Calu3 (cell line): ENCODE measurements at regions of chr11 and their contacts with region 1.

Region 1: DNA sequence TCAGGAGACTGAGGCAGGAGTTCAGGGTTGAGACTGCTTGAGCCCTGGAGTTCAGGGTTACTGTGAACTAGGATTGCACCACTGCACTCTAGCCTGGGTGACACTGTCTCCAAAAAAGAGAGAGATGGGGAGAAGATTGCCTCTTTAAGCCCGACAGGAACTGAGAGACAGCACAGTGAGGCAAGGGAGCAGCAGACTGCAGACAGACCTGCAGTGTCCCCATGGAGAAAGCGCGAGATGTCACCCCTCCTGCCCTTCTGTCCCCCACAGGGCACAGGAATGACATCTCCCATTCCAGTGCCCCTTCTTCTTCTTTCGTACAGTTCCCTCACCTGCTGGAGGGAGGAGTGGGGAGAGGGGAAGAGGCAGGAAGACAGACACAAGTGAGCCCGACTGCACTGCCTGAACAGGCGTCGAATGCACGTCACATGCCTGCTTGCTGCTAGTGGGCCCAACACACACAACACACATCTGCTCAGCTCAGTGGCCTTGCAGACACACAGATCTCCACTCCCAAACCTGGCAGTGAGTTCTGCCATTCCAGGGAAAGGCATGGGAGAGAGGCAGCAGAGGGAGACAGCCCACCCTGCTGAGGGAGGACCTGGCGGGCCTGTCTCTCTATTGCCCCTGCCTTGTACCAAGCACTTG is 167.0 kb downstream of the DSCAML1 start:
- DNase-seq: no peak
- H3K4me3 Mint-ChIP-seq: no peak overlapping the region
- H3K27ac Mint-ChIP-seq: no peak overlapping the region
- H3K4me1 Mint-ChIP-seq: no peaks in the 10 kb centered on the region
- H3K27me3 Mint-ChIP-seq: peaks cover 47% of the 10 kb centered on the region
- CTCF ChIP-seq: no peak

Region 2: DNA sequence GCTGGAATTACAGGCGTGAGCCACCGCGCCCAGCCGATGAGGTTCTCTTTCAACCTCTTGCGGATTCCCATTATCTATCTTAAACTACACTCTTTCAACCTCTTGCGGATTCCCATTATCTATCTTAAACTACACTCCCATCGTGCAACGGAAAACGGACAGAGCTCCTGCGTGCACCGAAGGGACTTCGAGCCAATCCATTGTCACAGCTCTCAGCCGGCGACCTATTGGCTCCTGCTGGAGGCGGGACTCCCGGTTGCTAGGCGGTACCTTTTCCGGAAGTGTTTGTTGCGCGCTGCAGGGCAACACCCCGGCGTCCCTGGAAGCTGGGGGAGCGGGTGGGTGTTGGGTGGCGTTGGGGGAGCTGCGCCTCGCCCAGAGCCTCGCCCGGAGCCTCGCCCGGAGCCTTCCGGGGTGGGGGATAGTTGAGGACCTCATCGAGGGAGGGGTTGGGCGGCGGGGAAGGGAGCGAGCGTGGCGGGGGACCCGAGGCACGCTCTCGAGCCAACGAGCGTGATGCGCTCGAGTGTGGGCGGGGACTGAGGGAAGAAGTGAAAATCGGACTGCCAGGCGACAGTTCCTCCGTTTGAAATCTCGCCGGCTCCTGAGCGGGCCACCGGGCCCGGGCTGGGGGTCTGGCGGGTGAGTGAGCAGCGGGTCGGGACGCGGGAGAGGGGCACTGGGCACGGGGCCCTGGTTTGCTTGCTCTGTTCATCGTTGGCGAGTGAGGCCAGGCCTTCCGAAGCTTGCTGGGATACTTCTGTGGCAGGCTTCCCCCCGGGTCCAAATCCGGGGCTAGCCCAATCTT is 302.2 kb before region 1 on chr11 and contains the start of gene CEP164:
- CTCF ChIA-PET with region 1: no interaction called
- intact Hi-C with region 1: no loop called
- DNase-seq: peak; percentile 89
- H3K4me3 Mint-ChIP-seq: no peak within 1 kb of the TSS
- H3K27ac Mint-ChIP-seq: no peak within 1 kb of the TSS
- H3K4me1 Mint-ChIP-seq: no peaks in the 10 kb centered on the region
- H3K27me3 Mint-ChIP-seq: no peaks in the 10 kb centered on the region
- CTCF ChIP-seq: no peak
- total RNA-seq, gene CEP164: 25.4 and 29.6 TPM in 2 replicates

Region 3: DNA sequence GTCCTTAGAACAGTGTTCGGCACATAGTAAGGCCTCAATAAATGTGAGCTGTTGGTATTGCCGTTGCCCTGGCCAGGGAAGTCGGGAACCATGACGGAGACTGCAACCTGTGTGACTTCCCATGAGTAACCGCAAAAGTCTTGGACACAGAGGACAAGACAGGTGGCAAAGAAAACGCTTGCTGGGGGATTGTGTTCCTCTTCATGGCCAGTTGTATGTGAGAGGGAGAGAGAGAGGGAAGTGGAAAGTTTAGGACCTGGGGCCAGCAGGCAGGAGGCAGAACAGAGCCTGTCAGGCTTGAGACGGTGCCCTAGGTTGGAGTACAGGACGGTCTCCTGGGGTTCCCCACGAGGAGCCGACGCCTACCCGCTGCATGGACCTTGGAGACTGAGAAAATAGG is 212.2 kb before region 1 on chr11:
- CTCF ChIA-PET with region 1: interaction called, 15 read pairs
- intact Hi-C with region 1: no loop called
- DNase-seq: no peak
- H3K4me3 Mint-ChIP-seq: no peak overlapping the region
- H3K27ac Mint-ChIP-seq: no peak overlapping the region
- H3K4me1 Mint-ChIP-seq: no peaks in the 10 kb centered on the region
- H3K27me3 Mint-ChIP-seq: peaks cover 36% of the 10 kb centered on the region
- CTCF ChIP-seq: no peak

Region 4: DNA sequence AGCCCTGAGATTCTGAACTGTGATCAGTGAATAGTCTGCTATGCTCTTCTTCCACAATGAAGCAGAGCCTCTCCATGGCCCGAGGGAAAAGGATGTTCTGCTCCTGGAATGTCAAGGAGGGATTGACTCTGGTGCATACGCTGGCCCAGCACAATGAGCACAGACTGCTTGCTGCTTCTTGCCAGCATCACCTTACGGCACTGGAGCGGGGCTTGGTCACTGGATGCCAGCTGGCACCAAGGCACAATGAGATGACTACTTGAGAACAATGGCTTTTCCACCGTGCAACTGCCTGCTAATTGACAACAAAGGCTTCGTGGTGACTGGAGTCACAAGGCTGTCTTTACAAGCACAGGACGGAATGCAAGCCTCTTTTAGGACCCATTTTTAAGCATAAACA is 27.8 kb after region 1 on chr11:
- CTCF ChIA-PET with region 1: no interaction called
- intact Hi-C with region 1: no loop called
- DNase-seq: no peak
- H3K4me3 Mint-ChIP-seq: no peak overlapping the region
- H3K27ac Mint-ChIP-seq: no peak overlapping the region
- H3K4me1 Mint-ChIP-seq: no peaks in the 10 kb centered on the region
- H3K27me3 Mint-ChIP-seq: peaks cover 50% of the 10 kb centered on the region
- CTCF ChIP-seq: no peak